ENCODE measurements at regions of chr1 and their contacts with region 1.

Region 1: DNA sequence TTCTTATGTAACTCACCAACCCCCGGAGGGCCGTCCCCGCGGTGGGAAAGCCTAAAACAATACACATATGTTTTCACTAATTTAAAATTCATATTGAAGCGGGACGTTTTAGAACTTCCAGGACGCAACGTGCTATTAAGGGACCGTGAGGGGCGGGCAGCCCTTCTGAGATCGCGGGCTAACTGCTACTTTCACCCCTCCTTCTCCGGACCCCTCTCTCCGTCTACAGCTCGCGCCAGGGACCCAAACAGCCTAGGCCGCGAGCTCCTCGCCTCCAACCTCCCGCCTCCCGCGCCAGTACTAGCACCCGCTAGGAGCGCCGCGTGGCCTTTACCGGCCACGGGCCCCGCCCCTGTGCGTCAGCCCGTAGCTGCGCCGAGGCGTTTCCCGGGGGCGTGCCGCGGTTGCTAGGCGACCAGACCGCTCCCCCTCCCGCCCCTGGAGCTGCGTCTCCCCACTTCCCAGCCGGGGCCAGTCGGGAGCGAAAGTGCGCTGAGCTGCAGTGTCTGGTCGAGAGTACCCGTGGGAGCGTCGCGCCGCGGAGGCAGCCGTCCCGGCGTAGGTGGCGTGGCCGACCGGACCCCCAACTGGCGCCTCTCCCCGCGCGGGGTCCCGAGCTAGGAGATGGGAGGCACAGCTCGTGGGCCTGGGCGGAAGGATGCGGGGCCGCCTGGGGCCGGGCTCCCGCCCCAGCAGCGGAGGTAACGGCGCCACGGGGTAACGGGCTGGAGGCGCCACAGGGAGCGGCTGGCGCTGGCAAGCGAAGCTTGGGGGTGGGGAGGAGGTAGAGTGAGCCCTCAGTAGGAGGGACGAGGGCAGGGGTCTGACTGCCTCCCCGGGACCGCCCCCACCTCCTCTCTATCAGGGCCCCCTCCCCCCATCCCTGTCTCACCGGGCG is at the start of gene DYRK3:
- DNase-seq: peak; percentile 97
- CTCF ChIP-seq: no peak

Region 2: GRCh38 chr1:206415942-206416341 is 219.4 kb before region 1 on chr1:
- CTCF ChIA-PET with region 1: no interaction called
- POLR2A ChIA-PET with region 1: no interaction called
- DNase-seq: no peak
- CTCF ChIP-seq: no peak

Region 3: DNA sequence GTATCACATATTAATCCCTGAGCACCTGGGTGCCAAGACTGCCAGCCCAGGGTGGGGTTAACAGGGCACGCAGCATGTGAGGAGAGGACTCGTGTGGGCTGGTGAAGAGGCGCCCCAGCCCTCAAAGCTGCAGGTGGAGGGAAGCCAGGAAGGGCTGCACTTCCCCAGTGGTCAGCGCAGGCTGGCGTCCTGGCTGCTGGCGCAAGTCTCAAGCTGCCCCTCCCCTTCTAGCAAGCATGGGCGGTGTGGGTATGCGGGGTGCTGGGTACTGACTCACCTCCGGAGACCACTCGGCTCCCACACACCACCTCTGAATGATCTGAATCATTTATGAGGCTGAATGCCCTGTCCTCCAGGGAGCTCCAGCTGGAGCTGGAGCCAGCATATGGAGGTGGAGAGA is 67.1 kb before region 1 on chr1:
- CTCF ChIA-PET with region 1: no interaction called
- POLR2A ChIA-PET with region 1: no interaction called
- DNase-seq: no peak
- CTCF ChIP-seq: no peak

Region 4: GRCh38 chr1:206649261-206649921 is 14.1 kb after region 1 on chr1:
- CTCF ChIA-PET with region 1: interaction called, 314 read pairs
- POLR2A ChIA-PET with region 1: interaction called, 6 read pairs
- DNase-seq: no peak
- CTCF ChIP-seq: no peak

Region 5: DNA sequence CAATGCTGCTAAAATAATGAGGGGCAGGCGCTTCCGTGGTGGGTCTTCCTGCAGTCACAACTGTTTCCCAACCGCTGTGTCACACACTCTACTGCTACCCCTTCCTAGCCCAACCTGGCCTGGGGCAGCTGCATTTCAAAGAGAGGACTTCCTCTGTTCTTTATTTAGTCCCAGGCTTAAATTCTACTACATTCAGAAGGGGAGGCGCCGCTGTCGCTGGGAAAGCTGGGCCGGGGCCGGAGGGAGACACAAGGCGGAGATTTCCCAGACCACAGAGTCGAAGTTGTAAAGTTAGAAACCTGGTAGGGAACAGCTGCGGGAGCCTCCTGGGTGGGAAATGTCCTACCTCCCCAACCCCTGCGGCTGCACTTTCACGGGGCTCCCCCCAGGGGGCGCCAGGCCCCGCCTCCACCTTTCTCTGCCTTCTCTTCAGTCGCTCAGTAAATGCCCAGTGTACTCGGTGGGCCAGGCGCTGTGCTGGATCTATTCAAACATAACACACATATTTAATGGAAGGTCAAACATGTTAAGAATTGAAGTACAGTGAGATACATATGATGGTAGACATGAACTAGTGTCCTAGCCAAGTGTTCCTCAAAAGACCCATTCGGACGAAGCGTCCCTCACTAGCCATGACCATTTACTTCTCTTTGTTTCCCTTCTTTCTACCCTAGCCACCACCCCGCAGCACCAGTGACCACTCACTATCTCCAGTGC is 23.1 kb after region 1 on chr1:
- CTCF ChIA-PET with region 1: interaction called, 314 read pairs
- POLR2A ChIA-PET with region 1: interaction called, 5 read pairs
- DNase-seq: peak; percentile 79
- CTCF ChIP-seq: peak; percentile 87